Activated naive CD4-positive, alpha-beta T cell treated with anti-CD3 and anti-CD28 coated beads for 36 hours (primary cell): ENCODE measurements at regions of chr16 and their contacts with region 1.

Region 1: GRCh38 chr16:58755989-58756649 is 22.0 kb upstream of the GOT2 start:
- DNase-seq: peak; percentile 92
- H3K4me3 Mint-ChIP-seq: peak overlapping the region; percentile 10
- H3K27ac Mint-ChIP-seq: peak overlapping the region; percentile 11
- H3K4me1 Mint-ChIP-seq: peaks cover 8% of the 10 kb centered on the region
- H3K27me3 Mint-ChIP-seq: no peaks in the 10 kb centered on the region

Region 2: GRCh38 chr16:58249780-58250478 is 506.2 kb before region 1 on chr16:
- CTCF ChIA-PET with region 1: no interaction called
- intact Hi-C with region 1: no loop called
- DNase-seq: peak; percentile 82
- H3K4me3 Mint-ChIP-seq: peak overlapping the region; percentile 85
- H3K27ac Mint-ChIP-seq: no peak overlapping the region
- H3K4me1 Mint-ChIP-seq: peaks cover 6% of the 10 kb centered on the region
- H3K27me3 Mint-ChIP-seq: peaks cover under 1% of the 10 kb centered on the region

Region 3: GRCh38 chr16:58336332-58337089 is 419.6 kb before region 1 on chr16:
- CTCF ChIA-PET with region 1: interaction called, 24 read pairs
- intact Hi-C with region 1: loop called (anchors 1 kb)
- DNase-seq: peak; percentile 94
- H3K4me3 Mint-ChIP-seq: no peak overlapping the region
- H3K27ac Mint-ChIP-seq: no peak overlapping the region
- H3K4me1 Mint-ChIP-seq: peaks cover 6% of the 10 kb centered on the region
- H3K27me3 Mint-ChIP-seq: peaks cover 2% of the 10 kb centered on the region

Region 4: GRCh38 chr16:58487566-58488351 is 268.4 kb before region 1 on chr16:
- CTCF ChIA-PET with region 1: interaction called, 13 read pairs
- intact Hi-C with region 1: no loop called
- DNase-seq: peak; percentile 82
- H3K4me3 Mint-ChIP-seq: no peak overlapping the region
- H3K27ac Mint-ChIP-seq: no peak overlapping the region
- H3K4me1 Mint-ChIP-seq: no peaks in the 10 kb centered on the region
- H3K27me3 Mint-ChIP-seq: peaks cover 5% of the 10 kb centered on the region

Region 5: GRCh38 chr16:58515125-58515870 is 240.8 kb before region 1 on chr16 and contains the start of gene SETD6:
- CTCF ChIA-PET with region 1: interaction called, 49 read pairs
- intact Hi-C with region 1: loop called (anchors 1 kb)
- DNase-seq: peak; percentile 78
- H3K4me3 Mint-ChIP-seq: peak within 1 kb of the TSS; percentile 88
- H3K27ac Mint-ChIP-seq: peak within 1 kb of the TSS; percentile 74
- H3K4me1 Mint-ChIP-seq: peaks cover 45% of the 10 kb centered on the region
- H3K27me3 Mint-ChIP-seq: no peaks in the 10 kb centered on the region
- total RNA-seq, gene SETD6: 8.1 to 8.5 TPM

Region 6: GRCh38 chr16:58678716-58679115 is 77.4 kb before region 1 on chr16:
- CTCF ChIA-PET with region 1: interaction called, 15 read pairs
- intact Hi-C with region 1: loop called (anchors 1 kb)
- DNase-seq: peak; percentile 35
- H3K4me3 Mint-ChIP-seq: no peak overlapping the region
- H3K27ac Mint-ChIP-seq: no peak overlapping the region
- H3K4me1 Mint-ChIP-seq: peaks cover 6% of the 10 kb centered on the region
- H3K27me3 Mint-ChIP-seq: no peaks in the 10 kb centered on the region

Region 7: GRCh38 chr16:58733671-58734458 is 22.3 kb before region 1 on chr16 and contains the start of gene GOT2:
- CTCF ChIA-PET with region 1: interaction called, 13 read pairs
- intact Hi-C with region 1: loop called (anchors 1 kb)
- DNase-seq: peak; percentile 83
- H3K4me3 Mint-ChIP-seq: peak within 1 kb of the TSS; percentile 95
- H3K27ac Mint-ChIP-seq: peak within 1 kb of the TSS; percentile 84
- H3K4me1 Mint-ChIP-seq: peaks cover 42% of the 10 kb centered on the region
- H3K27me3 Mint-ChIP-seq: no peaks in the 10 kb centered on the region
- total RNA-seq, gene GOT2: 156 to 162 TPM